ENCODE measurements at regions of chrX and their contacts with region 1.

Region 1: GRCh38 chrX:20066968-20067708 is 49.6 kb downstream of the MAP7D2 start:
- DNase-seq: peak; percentile 8 to 40 (median 20)
- ATAC-seq: peak; percentile 84
- H3K4me3 ChIP-seq: no peak overlapping the region
- H3K27ac ChIP-seq: no peak overlapping the region
- H3K4me1 ChIP-seq: no peaks in the 10 kb centered on the region
- H3K27me3 ChIP-seq: peaks cover 0 to 23% of the 10 kb centered on the region in 2 experiments; a peak in 2 of 5 replicates
- CTCF ChIP-seq: peak; percentile 52 to 70 (median 58)
- EP300 ChIP-seq: no peak
- POLR2A ChIP-seq: no peak
- RAD21 ChIP-seq: peak; percentile 48 to 70

Region 2: DNA sequence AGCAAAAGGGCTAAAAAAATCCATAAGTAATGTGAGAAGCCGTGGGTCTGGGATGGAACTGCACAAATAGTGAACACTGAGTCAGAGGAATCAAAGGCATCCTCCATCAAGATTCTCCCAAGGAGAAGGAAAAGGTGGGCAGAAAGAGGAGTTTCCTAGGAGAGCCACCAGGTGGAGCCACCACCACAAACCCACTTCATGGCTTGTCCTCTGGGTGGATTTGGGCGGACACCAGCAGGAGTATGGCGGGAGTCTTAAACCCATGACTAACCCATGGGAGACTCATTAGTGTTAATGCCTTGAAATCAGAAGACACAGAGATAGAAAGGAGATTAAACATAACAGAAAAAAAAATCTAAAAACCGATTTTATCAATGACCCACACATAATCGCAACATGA is 327.5 kb before region 1 on chrX:
- CTCF ChIA-PET with region 1: no interaction called
- POLR2A ChIA-PET with region 1: no interaction called
- in situ Hi-C with region 1: no loop called
- intact Hi-C with region 1: loop called (anchors 5 kb)
- DNase-seq: peak; percentile 58 to 65 (median 60)
- ATAC-seq: peak; percentile 93
- H3K4me3 ChIP-seq: no peak overlapping the region
- H3K27ac ChIP-seq: no peak overlapping the region
- H3K4me1 ChIP-seq: no peaks in the 10 kb centered on the region
- H3K27me3 ChIP-seq: peaks cover 0 to 5% of the 10 kb centered on the region in 2 experiments; a peak in 2 of 5 replicates
- CTCF ChIP-seq: peak; percentile 68 to 86 (median 72)
- EP300 ChIP-seq: no peak
- POLR2A ChIP-seq: no peak
- RAD21 ChIP-seq: peak; percentile 64 to 75

Region 3: DNA sequence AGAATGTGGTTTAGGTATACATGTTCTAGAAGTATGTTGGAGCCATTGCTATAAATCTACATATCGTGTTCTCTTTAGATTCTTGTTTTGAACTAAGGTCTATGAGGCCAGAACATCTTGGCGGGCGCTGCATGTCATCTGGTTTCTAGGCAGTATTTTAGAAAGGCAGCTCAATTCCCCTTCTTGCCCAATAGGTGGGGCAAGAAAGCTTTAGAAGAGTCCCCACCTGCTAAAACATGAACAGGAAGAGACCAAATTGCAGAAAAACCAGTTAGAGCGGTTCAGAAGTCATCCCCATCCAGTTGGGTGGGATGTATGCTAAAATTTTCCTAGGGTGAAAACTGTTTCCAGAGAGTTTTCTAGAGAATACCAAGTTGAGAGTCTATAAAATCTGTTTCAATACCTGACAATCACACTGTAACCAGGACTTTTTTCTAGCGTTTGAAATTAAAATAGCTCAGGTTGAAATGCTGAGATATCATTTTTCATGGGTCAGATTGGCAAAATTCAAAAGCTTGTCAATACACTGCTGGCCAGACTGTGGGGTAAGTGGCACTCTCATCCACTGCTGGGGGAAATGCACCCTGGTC is 162.3 kb before region 1 on chrX:
- CTCF ChIA-PET with region 1: no interaction called
- POLR2A ChIA-PET with region 1: no interaction called
- in situ Hi-C with region 1: loop called (anchors 10 kb)
- intact Hi-C with region 1: loop called (anchors 1 kb)
- DNase-seq: peak; percentile 15 to 47 (median 33)
- ATAC-seq: peak; percentile 81
- H3K4me3 ChIP-seq: no peak overlapping the region
- H3K27ac ChIP-seq: no peak overlapping the region
- H3K4me1 ChIP-seq: no peaks in the 10 kb centered on the region; a peak in 1 of 5 replicates
- H3K27me3 ChIP-seq: no peaks in the 10 kb centered on the region
- CTCF ChIP-seq: peak; percentile 66 to 78 (median 68)
- EP300 ChIP-seq: no peak
- POLR2A ChIP-seq: no peak
- RAD21 ChIP-seq: peak; percentile 63 to 76

Measured in K562 (cell line).